ENCODE measurements at regions of chr1 and their contacts with region 1.

Region 1: GRCh38 chr1:240619906-240620621 is 8.1 kb upstream of the GREM2 start:
- DNase-seq: no peak
- ATAC-seq: no peak
- H3K4me3 ChIP-seq: no peak overlapping the region
- H3K4me3 Mint-ChIP-seq: no peak overlapping the region
- H3K27ac ChIP-seq: no peak overlapping the region
- H3K27ac Mint-ChIP-seq: no peak overlapping the region
- H3K4me1 ChIP-seq: no peaks in the 10 kb centered on the region
- H3K4me1 Mint-ChIP-seq: no peaks in the 10 kb centered on the region
- H3K27me3 ChIP-seq: no peaks in the 10 kb centered on the region
- H3K27me3 Mint-ChIP-seq: peaks cover 3% of the 10 kb centered on the region
- CTCF ChIP-seq: no peak

Region 2: DNA sequence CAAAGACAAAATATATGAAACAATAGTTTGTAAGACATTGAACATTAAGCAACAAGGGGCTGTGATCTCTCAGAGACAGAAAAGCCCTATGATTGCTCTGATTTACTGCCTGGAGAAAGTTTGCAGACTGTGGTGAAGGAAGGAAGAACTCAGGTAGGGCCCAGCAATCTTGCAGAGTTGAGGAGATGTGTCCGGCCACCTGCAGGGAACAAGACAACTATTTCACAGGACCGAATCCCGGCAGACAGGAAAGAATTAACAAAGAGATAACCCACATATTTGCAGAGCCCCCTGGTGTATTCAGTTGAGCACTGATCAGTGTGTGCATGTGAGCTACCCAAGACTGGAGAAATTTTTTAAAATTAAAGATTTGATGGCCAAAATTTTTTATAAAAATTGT is 586.7 kb before region 1 on chr1:
- CTCF ChIA-PET with region 1: no interaction called
- POLR2A ChIA-PET with region 1: no interaction called
- intact Hi-C with region 1: no loop called
- DNase-seq: no peak
- ATAC-seq: no peak
- H3K4me3 ChIP-seq: no peak overlapping the region
- H3K4me3 Mint-ChIP-seq: no peak overlapping the region
- H3K27ac ChIP-seq: no peak overlapping the region
- H3K27ac Mint-ChIP-seq: no peak overlapping the region
- H3K4me1 ChIP-seq: no peaks in the 10 kb centered on the region
- H3K4me1 Mint-ChIP-seq: no peaks in the 10 kb centered on the region
- H3K27me3 ChIP-seq: no peaks in the 10 kb centered on the region
- H3K27me3 Mint-ChIP-seq: no peaks in the 10 kb centered on the region
- CTCF ChIP-seq: no peak

Region 3: GRCh38 chr1:240635466-240636256 is 15.6 kb after region 1 on chr1:
- CTCF ChIA-PET with region 1: no interaction called
- POLR2A ChIA-PET with region 1: no interaction called
- intact Hi-C with region 1: no loop called
- DNase-seq: no peak
- ATAC-seq: no peak
- H3K4me3 ChIP-seq: no peak overlapping the region
- H3K4me3 Mint-ChIP-seq: no peak overlapping the region
- H3K27ac ChIP-seq: no peak overlapping the region
- H3K27ac Mint-ChIP-seq: no peak overlapping the region
- H3K4me1 ChIP-seq: no peaks in the 10 kb centered on the region
- H3K4me1 Mint-ChIP-seq: no peaks in the 10 kb centered on the region
- H3K27me3 ChIP-seq: no peaks in the 10 kb centered on the region
- H3K27me3 Mint-ChIP-seq: no peaks in the 10 kb centered on the region
- CTCF ChIP-seq: no peak

Region 4: DNA sequence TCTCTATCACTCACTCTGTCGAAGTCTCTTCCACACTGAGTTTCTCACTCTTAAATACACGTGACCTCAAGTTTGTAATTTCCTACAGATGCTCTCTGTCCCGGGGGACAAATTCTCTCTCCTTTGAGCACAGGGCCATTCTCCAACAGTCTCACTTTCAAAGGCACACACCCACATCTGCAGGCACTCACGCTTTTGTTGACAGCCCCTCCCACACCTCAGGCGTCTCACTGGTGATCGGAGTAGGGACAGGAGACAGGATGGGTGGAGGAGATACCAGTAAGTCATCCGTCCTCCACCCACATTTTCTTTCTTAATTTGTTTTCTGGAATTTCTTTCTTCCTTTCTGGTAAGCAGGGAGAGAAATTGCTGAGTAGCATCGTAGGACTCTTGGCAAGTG is 32.5 kb after region 1 on chr1:
- CTCF ChIA-PET with region 1: no interaction called
- POLR2A ChIA-PET with region 1: no interaction called
- intact Hi-C with region 1: no loop called
- DNase-seq: peak in 1 of 14 experiments; percentile 29
- ATAC-seq: no peak
- H3K4me3 ChIP-seq: no peak overlapping the region
- H3K4me3 Mint-ChIP-seq: no peak overlapping the region
- H3K27ac ChIP-seq: no peak overlapping the region
- H3K27ac Mint-ChIP-seq: no peak overlapping the region
- H3K4me1 ChIP-seq: no peaks in the 10 kb centered on the region
- H3K4me1 Mint-ChIP-seq: no peaks in the 10 kb centered on the region
- H3K27me3 ChIP-seq: no peaks in the 10 kb centered on the region
- H3K27me3 Mint-ChIP-seq: no peaks in the 10 kb centered on the region
- CTCF ChIP-seq: no peak

Region 5: GRCh38 chr1:240672132-240672811 is 52.2 kb after region 1 on chr1:
- CTCF ChIA-PET with region 1: no interaction called
- POLR2A ChIA-PET with region 1: no interaction called
- intact Hi-C with region 1: loop called in 1 of 2 experiments (anchors 5 kb)
- DNase-seq: no peak
- ATAC-seq: no peak
- H3K4me3 ChIP-seq: no peak overlapping the region
- H3K4me3 Mint-ChIP-seq: no peak overlapping the region
- H3K27ac ChIP-seq: no peak overlapping the region
- H3K27ac Mint-ChIP-seq: no peak overlapping the region
- H3K4me1 ChIP-seq: peaks cover under 1% of the 10 kb centered on the region
- H3K4me1 Mint-ChIP-seq: peaks cover 4% of the 10 kb centered on the region
- H3K27me3 ChIP-seq: no peaks in the 10 kb centered on the region
- H3K27me3 Mint-ChIP-seq: no peaks in the 10 kb centered on the region
- CTCF ChIP-seq: no peak

Region 6: DNA sequence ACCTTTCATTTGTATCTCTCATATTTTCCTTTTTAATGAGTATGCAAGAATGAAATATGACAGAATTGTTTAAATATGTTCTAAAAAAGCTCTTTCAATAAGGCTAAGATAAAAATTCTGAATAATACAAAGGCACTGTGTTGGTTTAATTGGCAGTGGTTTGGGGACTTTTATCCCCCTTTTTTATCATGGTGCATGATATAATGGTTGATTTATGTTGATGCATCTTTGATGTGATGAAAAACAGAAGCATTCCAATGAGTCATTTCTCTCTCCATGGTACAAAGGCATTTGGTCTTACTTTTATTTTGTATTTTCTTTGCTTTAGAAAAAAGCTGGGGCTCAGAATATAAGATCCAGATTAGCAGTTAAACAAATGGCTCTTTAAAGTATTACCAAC is 119.1 kb after region 1 on chr1:
- CTCF ChIA-PET with region 1: no interaction called
- POLR2A ChIA-PET with region 1: no interaction called
- intact Hi-C with region 1: no loop called
- DNase-seq: no peak
- ATAC-seq: no peak
- H3K4me3 ChIP-seq: no peak overlapping the region
- H3K4me3 Mint-ChIP-seq: no peak overlapping the region
- H3K27ac ChIP-seq: no peak overlapping the region
- H3K27ac Mint-ChIP-seq: no peak overlapping the region
- H3K4me1 ChIP-seq: no peaks in the 10 kb centered on the region
- H3K4me1 Mint-ChIP-seq: no peaks in the 10 kb centered on the region
- H3K27me3 ChIP-seq: no peaks in the 10 kb centered on the region
- H3K27me3 Mint-ChIP-seq: no peaks in the 10 kb centered on the region
- CTCF ChIP-seq: no peak

Measured in CD4-positive, alpha-beta T cell (primary cell).